CD8-positive, alpha-beta T cell (primary cell): ENCODE measurements at regions of chr9 and their contacts with region 1.

Region 1: DNA sequence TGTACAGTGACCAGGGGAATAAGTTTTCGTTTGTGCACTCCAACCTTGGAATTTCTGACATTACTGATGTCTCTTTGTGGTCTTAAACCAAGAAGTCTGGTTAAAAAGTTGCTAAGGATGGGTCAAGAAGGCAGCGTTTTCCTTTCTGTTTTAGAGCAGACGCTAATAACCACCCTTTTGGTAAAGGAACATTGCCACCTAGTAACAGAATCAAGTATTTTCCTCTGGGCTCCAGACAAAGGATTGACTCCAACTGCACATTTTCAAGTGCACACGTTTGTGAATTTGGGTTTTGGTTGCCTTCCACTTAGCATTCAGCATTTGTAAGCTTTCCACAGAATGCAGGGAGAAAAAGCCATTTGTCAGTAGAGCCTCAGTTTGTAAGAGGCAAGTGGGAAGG is 22.2 kb upstream of the CEP78 start:
- DNase-seq: peak in 2 of 9 experiments; percentile 56 to 68
- ATAC-seq: peak; percentile 50
- H3K4me3 ChIP-seq: no peak overlapping the region
- H3K4me3 Mint-ChIP-seq: no peak overlapping the region
- H3K27ac ChIP-seq: no peak overlapping the region
- H3K27ac Mint-ChIP-seq: no peak overlapping the region
- H3K4me1 ChIP-seq: peaks cover 40% of the 10 kb centered on the region
- H3K4me1 Mint-ChIP-seq: peaks cover 42% of the 10 kb centered on the region
- H3K27me3 ChIP-seq: no peaks in the 10 kb centered on the region
- H3K27me3 Mint-ChIP-seq: no peaks in the 10 kb centered on the region
- CTCF ChIP-seq: peak; percentile 49

Region 2: DNA sequence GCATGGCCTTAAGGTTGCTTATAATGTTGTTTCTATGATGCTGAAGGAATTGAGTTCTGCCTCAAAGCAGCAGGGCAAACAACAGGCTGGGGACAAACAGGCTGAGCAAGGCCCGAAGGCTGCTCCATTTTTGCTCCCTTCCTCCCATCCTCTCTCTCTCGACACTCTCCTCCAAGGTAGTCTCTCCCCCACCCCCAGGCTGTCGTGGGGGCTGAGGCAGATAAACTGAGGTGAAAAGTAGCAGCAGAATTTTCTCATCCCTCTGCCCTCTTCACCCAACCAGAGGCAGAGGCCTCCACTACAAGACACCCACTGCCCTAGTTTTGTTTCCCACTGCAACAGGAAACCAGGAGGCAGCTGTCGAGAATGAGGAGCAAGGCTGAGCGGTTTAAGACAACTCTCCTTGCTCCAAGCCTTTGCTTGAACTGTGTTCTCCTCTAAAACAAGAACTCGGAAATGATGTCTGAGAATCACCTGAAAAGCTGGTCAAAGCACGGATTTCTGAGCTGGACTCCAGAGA is 552.1 kb before region 1 on chr9:
- CTCF ChIA-PET with region 1: no interaction called
- POLR2A ChIA-PET with region 1: no interaction called
- intact Hi-C with region 1: no loop called
- DNase-seq: no peak
- ATAC-seq: no peak
- H3K4me3 ChIP-seq: no peak overlapping the region
- H3K4me3 Mint-ChIP-seq: no peak overlapping the region
- H3K27ac ChIP-seq: no peak overlapping the region
- H3K27ac Mint-ChIP-seq: no peak overlapping the region
- H3K4me1 ChIP-seq: no peaks in the 10 kb centered on the region
- H3K4me1 Mint-ChIP-seq: no peaks in the 10 kb centered on the region
- H3K27me3 ChIP-seq: no peaks in the 10 kb centered on the region
- H3K27me3 Mint-ChIP-seq: peaks cover 2% of the 10 kb centered on the region
- CTCF ChIP-seq: no peak

Region 3: DNA sequence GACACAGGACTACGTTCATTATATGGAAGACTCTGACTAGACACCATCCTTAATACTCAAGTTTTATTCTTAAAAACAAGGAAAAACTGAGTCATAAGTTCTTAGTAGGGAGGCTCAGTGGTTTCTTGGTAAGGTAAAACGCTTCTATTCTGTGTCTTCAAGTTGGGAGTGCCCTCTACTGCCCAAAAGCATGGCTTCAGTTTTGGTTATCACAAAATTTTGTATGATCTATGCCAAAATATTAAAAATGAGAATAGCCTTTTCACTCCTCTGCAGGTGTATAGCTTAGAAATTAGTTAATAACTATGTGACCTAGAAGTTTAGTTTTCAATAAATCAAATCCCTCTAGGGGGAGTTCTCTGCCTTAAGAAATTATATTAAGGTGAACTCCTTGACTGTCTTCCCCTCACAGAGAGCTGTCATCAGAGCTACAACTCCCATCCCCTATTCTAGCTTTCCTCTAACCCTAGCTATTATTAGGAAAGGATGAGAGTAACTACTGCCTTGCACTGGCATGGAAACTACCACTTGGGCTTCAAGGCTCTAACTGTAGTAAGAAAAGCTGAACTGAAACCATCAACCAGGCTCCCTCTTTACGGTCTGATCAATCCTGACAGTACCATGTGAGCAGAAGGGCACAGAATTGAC is 371.8 kb before region 1 on chr9:
- CTCF ChIA-PET with region 1: interaction called, 3 read pairs
- POLR2A ChIA-PET with region 1: no interaction called
- intact Hi-C with region 1: loop called (anchors 2 to 5 kb)
- DNase-seq: peak in 1 of 9 experiments; percentile 24
- ATAC-seq: no peak
- H3K4me3 ChIP-seq: no peak overlapping the region
- H3K4me3 Mint-ChIP-seq: no peak overlapping the region
- H3K27ac ChIP-seq: no peak overlapping the region
- H3K27ac Mint-ChIP-seq: no peak overlapping the region
- H3K4me1 ChIP-seq: no peaks in the 10 kb centered on the region
- H3K4me1 Mint-ChIP-seq: peaks cover 15% of the 10 kb centered on the region
- H3K27me3 ChIP-seq: no peaks in the 10 kb centered on the region
- H3K27me3 Mint-ChIP-seq: no peaks in the 10 kb centered on the region
- CTCF ChIP-seq: no peak

Region 4: GRCh38 chr9:78121488-78121887 is 92.2 kb before region 1 on chr9:
- CTCF ChIA-PET with region 1: interaction called, 10 read pairs
- POLR2A ChIA-PET with region 1: no interaction called
- intact Hi-C with region 1: loop called in 1 of 2 experiments (anchors 5 kb)
- DNase-seq: peak; percentile 5 to 78 (median 57)
- ATAC-seq: no peak
- H3K4me3 ChIP-seq: no peak overlapping the region
- H3K4me3 Mint-ChIP-seq: no peak overlapping the region
- H3K27ac ChIP-seq: no peak overlapping the region
- H3K27ac Mint-ChIP-seq: no peak overlapping the region
- H3K4me1 ChIP-seq: peaks cover 25% of the 10 kb centered on the region
- H3K4me1 Mint-ChIP-seq: peaks cover 30% of the 10 kb centered on the region
- H3K27me3 ChIP-seq: no peaks in the 10 kb centered on the region
- H3K27me3 Mint-ChIP-seq: peaks cover under 1% of the 10 kb centered on the region
- CTCF ChIP-seq: peak; percentile 60

Region 5: GRCh38 chr9:78196258-78196657 is 17.5 kb before region 1 on chr9:
- CTCF ChIA-PET with region 1: interaction called, 7 read pairs
- POLR2A ChIA-PET with region 1: interaction called, 17 read pairs
- intact Hi-C with region 1: no loop called
- DNase-seq: no peak
- ATAC-seq: no peak
- H3K4me3 ChIP-seq: no peak overlapping the region
- H3K4me3 Mint-ChIP-seq: no peak overlapping the region
- H3K27ac ChIP-seq: no peak overlapping the region
- H3K27ac Mint-ChIP-seq: no peak overlapping the region
- H3K4me1 ChIP-seq: peaks cover 16% of the 10 kb centered on the region
- H3K4me1 Mint-ChIP-seq: peaks cover 15% of the 10 kb centered on the region
- H3K27me3 ChIP-seq: no peaks in the 10 kb centered on the region
- H3K27me3 Mint-ChIP-seq: no peaks in the 10 kb centered on the region
- CTCF ChIP-seq: no peak